Uterus (tissue), 4 donors: ENCODE measurements at regions of chr10 and their contacts with region 1.

Region 1: DNA sequence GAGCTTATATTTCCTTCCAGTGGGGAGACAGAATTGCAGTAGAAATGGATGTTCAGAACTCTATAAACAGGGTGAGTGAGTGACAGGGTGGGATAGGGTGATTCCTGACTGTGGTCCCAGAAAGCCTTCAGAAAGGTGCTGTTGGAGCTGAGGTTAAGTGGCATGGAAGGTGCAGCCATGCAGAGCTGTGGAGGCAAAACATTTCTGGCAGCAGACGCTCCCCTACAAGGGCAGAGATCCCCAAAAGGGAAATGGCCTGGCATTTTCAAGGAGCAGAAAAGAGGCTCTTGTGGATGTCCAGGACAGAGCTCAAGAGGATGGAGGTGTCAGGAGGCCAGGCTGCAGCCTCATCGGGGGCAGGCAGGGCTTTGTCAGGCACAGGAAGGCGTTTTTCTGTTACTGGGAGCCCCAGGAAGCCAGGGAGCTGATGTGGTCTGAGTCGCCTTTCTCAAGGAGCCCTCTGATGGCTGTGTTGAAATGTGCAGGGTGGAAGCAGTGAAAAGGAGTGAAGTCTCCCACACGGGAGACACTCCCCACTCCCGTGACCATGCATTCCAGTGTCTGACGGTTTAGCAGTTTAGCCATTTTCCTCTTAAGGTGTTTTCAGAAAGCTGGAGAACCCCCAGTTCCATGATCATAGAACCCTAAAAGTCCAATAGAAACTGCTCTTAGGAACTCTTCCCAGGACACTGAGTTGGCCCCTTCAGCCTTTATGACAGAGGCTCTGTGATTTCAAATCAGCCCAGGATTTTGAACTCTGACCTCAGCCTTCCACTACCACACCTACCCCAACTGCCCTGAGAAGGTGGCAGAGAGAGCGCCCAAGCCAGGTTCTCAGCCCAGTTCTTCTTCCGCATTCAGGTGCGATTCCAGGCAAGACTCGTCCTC is 96.2 kb downstream of the C10orf105 start:
- DNase-seq: peak; percentile 38 to 39
- H3K4me3 ChIP-seq: no peak overlapping the region
- H3K27ac ChIP-seq: peak overlapping the region in 1 of 2 donors; percentile 60
- H3K4me1 ChIP-seq: peaks cover 0 to 4% of the 10 kb centered on the region in 2 donors
- H3K27me3 ChIP-seq: no peaks in the 10 kb centered on the region
- CTCF ChIP-seq: no peak
- POLR2A ChIP-seq: no peak

Region 2: DNA sequence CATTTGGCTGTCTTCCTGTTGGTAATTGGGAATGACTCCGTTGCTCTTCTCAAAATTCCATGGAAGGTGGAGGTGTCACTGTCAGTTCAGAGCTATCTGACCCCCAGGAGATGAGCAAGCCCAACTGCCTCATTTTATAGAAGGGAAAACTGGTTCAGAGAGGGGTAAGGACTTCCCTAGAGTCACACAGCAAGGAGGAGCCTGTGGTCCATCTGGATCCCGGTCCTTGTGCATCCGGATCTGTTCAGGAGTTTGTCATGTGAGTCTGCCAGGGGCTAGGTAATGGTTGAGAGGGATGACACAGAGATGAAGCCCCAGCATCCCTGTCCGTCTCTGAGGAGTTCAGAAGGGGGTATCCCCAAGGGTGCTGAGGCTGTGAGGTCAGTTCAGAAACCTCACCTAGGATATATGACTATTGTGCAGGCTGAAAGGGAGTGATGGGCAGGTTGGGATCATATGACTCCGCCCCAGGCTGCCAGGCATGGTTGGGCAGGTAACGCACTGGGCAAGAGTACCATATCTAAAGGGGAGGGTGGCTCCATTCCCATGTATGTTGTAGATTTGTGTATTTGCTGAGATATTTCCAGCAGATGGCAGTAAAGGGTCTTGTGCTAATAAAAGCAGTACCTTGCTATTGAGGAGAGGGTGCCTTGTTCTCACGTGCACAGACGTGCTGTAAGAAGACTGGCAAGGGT is 320.3 kb before region 1 on chr10:
- intact Hi-C with region 1: loop called (anchors 5 kb)
- DNase-seq: no peak
- H3K4me3 ChIP-seq: no peak overlapping the region
- H3K27ac ChIP-seq: no peak overlapping the region
- H3K4me1 ChIP-seq: no peaks in the 10 kb centered on the region
- H3K27me3 ChIP-seq: no peaks in the 10 kb centered on the region
- CTCF ChIP-seq: peak; percentile 48 to 52 (median 51)
- POLR2A ChIP-seq: no peak

Region 3: GRCh38 chr10:71431239-71432100 is 191.9 kb before region 1 on chr10:
- intact Hi-C with region 1: no loop called
- DNase-seq: no peak
- H3K4me3 ChIP-seq: no peak overlapping the region
- H3K27ac ChIP-seq: no peak overlapping the region
- H3K4me1 ChIP-seq: no peaks in the 10 kb centered on the region
- H3K27me3 ChIP-seq: no peaks in the 10 kb centered on the region
- CTCF ChIP-seq: no peak
- POLR2A ChIP-seq: no peak

Region 4: DNA sequence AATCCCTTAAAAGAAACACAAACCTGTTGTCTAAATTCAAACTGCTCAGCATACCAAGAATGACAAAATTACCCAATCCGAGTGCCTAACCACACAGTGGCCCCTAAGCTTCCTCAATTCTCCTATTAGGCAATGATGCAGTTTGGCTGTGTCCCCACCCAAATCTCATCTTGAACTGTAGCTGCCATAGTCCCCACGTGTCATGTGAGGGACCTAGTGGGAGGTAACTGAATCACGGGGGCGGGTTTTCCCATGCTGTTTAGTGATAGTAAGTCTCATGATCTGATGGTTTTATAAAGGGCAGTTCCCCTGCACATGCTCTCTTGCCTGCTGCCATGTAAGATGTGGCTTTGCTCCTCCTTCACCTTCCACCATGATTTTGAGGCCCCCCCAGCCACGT is 205.8 kb after region 1 on chr10:
- intact Hi-C with region 1: no loop called
- DNase-seq: no peak
- H3K4me3 ChIP-seq: no peak overlapping the region
- H3K27ac ChIP-seq: no peak overlapping the region
- H3K4me1 ChIP-seq: no peaks in the 10 kb centered on the region
- H3K27me3 ChIP-seq: no peaks in the 10 kb centered on the region
- CTCF ChIP-seq: no peak
- POLR2A ChIP-seq: no peak